Esophagus muscularis mucosa (tissue), 4 donors: ENCODE measurements at regions of chr17 and their contacts with region 1.

Region 1: DNA sequence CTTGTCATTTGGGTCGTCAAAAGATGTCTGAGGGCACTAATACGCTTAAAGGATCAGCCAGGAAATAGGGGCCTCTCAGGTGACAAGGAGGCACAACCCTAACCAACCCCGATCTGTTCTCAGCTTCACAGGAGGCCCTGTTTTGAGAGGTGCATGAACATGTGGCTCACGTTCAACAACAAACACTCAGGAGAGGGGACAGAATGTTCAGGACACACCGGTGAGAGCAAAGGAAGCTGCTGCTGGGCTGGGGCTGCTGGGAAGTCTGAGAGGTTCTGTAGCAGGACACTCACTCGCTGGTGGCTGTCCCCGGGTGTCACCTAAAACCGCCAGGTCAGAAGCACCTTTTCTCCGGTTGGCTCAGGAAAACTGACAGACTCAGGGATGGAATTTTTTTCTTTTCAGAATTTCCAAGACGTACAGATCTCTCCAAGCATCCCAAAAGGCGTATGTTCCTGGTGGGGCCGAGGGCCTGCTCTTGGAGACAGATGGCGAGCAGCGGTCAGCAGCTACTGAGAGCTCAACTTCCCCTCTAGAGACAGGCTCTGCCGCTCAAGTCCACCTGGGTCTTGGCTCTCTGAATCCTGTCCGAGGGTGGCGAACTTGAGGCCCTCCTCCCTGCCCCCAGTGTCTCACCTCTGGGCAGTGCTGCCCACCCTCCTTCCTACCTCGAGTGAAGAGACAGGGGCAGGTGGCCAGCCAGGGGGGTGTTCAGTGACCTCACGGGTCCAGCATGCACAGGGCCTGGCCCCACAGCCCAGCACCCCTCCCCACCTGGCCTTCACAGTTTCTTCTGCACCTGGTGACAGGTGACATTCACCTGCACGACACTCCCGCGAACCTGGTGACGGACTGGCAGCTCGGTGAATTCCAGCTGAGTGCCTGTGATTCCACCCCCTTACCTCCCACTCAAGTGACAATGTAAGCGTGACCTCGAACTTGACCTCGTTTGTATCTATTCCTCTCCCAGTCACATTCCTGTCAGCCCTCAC is 22.9 kb downstream of the CLUH start:
- DNase-seq: peak; percentile 88
- H3K4me3 ChIP-seq: no peak overlapping the region
- H3K27ac ChIP-seq: peak overlapping the region; percentile 71 to 75 (median 72)
- H3K4me1 ChIP-seq: peaks cover 40 to 60% (median 50%) of the 10 kb centered on the region in 4 donors
- H3K27me3 ChIP-seq: no peaks in the 10 kb centered on the region
- CTCF ChIP-seq: no peak
- EP300 ChIP-seq: peak; percentile 35
- POLR2A ChIP-seq: no peak

Region 2: GRCh38 chr17:2511462-2512369 is 176.9 kb before region 1 on chr17 and contains the start of gene METTL16:
- intact Hi-C with region 1: loop called (anchors 10 kb)
- DNase-seq: peak; percentile 99
- H3K4me3 ChIP-seq: peak within 1 kb of the TSS; percentile 58 to 75 (median 68)
- H3K27ac ChIP-seq: peak within 1 kb of the TSS; percentile 85 to 93 (median 89)
- H3K4me1 ChIP-seq: peaks cover 29 to 41% (median 36%) of the 10 kb centered on the region in 4 donors
- H3K27me3 ChIP-seq: no peaks in the 10 kb centered on the region
- CTCF ChIP-seq: no peak
- EP300 ChIP-seq: no peak
- POLR2A ChIP-seq: no peak
- total RNA-seq, gene METTL16: 18.9 to 28.8 (median 24.5) TPM

Region 3: GRCh38 chr17:2592971-2593820 is 95.5 kb before region 1 on chr17 and contains the start of gene PAFAH1B1:
- intact Hi-C with region 1: loop called (anchors 5 kb)
- DNase-seq: peak; percentile 96
- H3K4me3 ChIP-seq: peak within 1 kb of the TSS; percentile 88 to 99 (median 97)
- H3K27ac ChIP-seq: peak within 1 kb of the TSS; percentile 97 to 99 (median 98)
- H3K4me1 ChIP-seq: peaks cover 38 to 49% (median 45%) of the 10 kb centered on the region in 4 donors
- H3K27me3 ChIP-seq: no peaks in the 10 kb centered on the region
- CTCF ChIP-seq: peak in 2 of 3 experiments; percentile 27 to 53
- EP300 ChIP-seq: no peak
- POLR2A ChIP-seq: peak; percentile 41
- total RNA-seq, gene PAFAH1B1: 86.5 to 119 (median 102) TPM

Region 4: DNA sequence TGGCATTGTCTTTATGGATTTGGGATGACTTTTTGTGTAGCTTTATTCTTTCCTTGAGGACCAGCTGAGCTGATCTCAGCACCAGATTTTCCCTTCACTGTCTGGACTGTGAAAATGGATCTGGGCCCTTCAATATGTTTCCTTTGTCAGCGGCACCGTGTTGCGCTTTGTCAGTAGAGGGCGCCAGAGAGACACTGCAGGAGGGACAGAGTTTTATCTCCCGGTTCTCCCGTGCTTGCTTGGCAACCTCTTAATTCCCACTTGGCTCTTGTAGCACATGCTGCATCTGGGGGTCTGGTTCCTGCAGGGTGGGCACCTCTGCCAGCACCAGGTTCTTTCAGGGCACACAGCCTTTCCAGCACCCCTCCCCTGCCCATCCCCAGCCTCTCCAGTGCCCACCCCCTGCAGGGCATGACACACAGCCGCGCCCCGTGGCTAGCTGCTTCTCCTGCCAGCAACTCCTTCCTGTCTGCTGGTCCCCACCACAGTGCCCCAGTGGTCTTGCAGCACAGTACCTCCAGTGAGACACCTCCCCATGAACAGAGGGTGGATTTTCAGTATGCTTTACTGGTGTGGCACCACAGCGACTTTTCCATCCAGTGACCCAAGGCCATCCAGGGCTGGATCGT is 355.2 kb after region 1 on chr17:
- intact Hi-C with region 1: no loop called
- DNase-seq: no peak
- H3K4me3 ChIP-seq: no peak overlapping the region
- H3K27ac ChIP-seq: no peak overlapping the region
- H3K4me1 ChIP-seq: peaks cover 4 to 7% (median 6%) of the 10 kb centered on the region in 4 donors
- H3K27me3 ChIP-seq: peaks cover 0 to 32% (median 0%) of the 10 kb centered on the region in 4 donors
- CTCF ChIP-seq: no peak
- EP300 ChIP-seq: no peak
- POLR2A ChIP-seq: no peak